ENCODE measurements at regions of chr2 and their contacts with region 1.

Region 1: GRCh38 chr2:119766944-119767343 is 7.2 kb downstream of the PTPN4 start:
- DNase-seq: no peak
- H3K4me3 ChIP-seq: peak overlapping the region in 1 of 4 experiments; percentile 86; a peak in 1 of 8 replicates
- H3K27ac ChIP-seq: no peak overlapping the region
- H3K4me1 ChIP-seq: peaks cover 3 to 18% (median 15%) of the 10 kb centered on the region in 4 experiments
- H3K27me3 ChIP-seq: no peaks in the 10 kb centered on the region
- CTCF ChIP-seq: peak in 1 of 3 experiments; percentile 33; a peak in 2 of 4 replicates
- EP300 ChIP-seq: no peak
- POLR2A ChIP-seq: peak in 1 of 2 experiments; percentile 53; a peak in 1 of 3 replicates
- RAD21 ChIP-seq: peak in 1 of 2 experiments; percentile 17; a peak in 1 of 4 replicates

Region 2: DNA sequence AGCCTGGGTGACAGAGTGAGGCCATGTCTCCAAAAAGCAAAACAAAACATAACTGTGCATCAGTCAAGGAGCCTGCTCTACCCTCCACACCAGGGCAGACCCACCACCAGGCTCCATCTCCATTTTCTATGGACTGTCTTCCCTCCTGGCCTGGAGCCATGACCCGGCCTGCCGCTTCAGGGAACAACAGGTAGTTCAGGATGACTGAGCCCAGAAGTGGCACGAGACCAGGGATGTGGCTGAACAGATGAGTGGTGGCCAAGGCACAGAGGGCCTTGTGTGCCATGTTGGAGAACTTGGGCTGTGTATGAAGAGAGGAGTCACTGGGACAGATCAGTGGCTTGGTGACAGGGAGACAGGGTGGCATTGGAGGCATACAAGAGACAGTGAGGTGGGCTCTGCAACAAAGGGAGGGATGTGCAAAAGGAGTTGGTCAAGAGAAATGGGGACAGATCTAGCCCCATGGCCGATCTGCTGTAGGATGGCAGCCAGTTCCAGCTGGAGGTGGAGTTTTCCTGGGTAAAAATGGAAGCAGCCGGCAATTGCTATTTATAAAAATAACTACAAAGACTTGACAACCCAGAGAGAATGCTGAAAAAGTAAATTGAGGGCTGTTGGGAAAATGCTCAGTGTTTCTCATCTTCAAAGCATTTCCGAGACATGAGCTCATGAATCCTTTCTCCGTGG is 53.0 kb before region 1 on chr2:
- CTCF ChIA-PET with region 1: no interaction called
- POLR2A ChIA-PET with region 1: no interaction called
- DNase-seq: no peak
- H3K4me3 ChIP-seq: no peak overlapping the region
- H3K27ac ChIP-seq: no peak overlapping the region
- H3K4me1 ChIP-seq: peaks cover 0 to 6% (median 1%) of the 10 kb centered on the region in 4 experiments; a peak in 2 of 7 replicates
- H3K27me3 ChIP-seq: no peaks in the 10 kb centered on the region
- CTCF ChIP-seq: no peak
- EP300 ChIP-seq: no peak
- POLR2A ChIP-seq: no peak
- RAD21 ChIP-seq: no peak

Region 3: DNA sequence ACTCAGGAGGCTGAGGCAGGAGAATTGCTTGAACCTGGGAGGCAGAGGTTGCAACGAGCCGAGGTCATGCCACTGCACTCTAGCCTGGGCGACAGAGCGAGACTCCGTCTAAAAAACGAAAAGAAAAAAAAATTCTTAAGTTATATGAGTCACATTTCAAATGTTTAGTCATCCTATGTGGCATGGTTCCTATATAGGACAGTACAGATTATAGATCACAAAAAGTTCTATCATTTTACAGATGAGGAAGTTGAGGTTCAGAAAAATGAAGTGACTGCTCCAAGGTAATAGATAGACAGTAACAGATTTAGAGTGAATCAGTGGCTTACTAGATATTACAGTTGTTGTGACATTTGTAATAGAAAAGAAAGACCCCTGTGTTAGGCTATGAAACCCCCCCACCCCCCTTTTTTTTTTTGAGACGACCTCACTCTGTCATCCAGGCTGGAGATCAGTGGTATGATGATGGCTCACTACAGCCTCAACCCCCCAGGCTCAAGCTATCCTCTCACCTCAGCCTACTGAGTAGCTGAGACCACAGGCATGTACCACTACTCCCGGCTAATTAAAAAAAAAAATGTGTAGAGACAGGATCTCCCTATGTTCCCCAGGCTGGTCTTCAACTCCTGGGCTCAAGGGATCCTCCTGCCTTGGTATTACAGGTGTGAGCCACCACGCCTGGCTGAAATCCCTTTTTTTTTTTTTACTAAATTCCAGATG is 15.5 kb after region 1 on chr2:
- CTCF ChIA-PET with region 1: interaction called, 5 read pairs
- POLR2A ChIA-PET with region 1: interaction called, 21 read pairs
- DNase-seq: no peak
- H3K4me3 ChIP-seq: no peak overlapping the region
- H3K27ac ChIP-seq: no peak overlapping the region
- H3K4me1 ChIP-seq: peaks cover 0 to 16% (median 7%) of the 10 kb centered on the region in 4 experiments; a peak in 4 of 7 replicates
- H3K27me3 ChIP-seq: no peaks in the 10 kb centered on the region
- CTCF ChIP-seq: no peak
- EP300 ChIP-seq: no peak
- POLR2A ChIP-seq: no peak
- RAD21 ChIP-seq: no peak